ENCODE measurements at regions of chr9 and their contacts with region 1.

Region 1: DNA sequence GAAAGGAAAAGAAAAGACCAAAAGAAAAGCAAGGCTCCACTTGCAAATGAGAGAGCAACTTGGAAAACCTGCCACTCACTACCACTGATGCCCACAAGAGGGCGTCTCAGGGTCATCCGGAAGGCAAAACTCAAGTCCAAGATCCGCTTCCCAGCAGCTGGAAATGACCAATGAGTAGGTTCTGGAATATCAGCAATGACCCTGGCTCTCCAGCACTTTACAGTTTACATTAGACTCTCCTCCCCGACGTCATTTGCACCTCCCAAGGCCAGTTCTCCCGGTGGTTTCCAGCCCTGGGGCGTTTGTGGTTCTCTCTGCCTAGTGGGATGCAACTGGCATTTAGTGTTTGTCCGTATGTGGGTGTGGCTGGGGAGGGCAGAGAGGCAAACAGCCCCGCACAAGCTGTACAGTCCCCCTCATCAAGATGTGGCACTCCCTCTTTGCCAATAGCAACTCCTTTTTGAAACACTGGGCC is 193.8 kb upstream of the ZNF618 start:
- DNase-seq: peak; percentile 69
- ATAC-seq: no peak
- H3K4me3 Mint-ChIP-seq: no peak overlapping the region
- H3K27ac Mint-ChIP-seq: no peak overlapping the region
- H3K4me1 Mint-ChIP-seq: peaks cover 1% of the 10 kb centered on the region
- H3K27me3 Mint-ChIP-seq: peaks cover 61% of the 10 kb centered on the region
- CTCF ChIP-seq: peak; percentile 88

Region 2: DNA sequence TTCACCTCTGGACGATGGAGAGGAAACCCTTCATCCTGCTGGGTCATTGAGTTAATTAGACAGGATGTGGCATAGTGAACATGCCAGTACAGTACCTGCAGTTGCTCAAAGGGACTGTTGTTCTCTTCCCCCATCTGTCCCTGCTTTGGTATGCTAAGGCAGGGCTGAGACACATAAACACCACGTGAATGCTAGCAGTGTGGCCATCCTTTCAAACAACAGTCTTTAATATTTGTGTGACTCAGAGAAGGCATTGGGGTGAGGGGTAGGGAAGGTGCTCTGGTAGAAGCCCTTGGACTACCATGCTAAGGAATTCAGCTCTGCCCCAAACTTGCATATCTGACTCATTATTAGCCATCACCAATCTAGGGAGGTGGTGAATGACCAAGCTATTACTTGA is 13.6 kb after region 1 on chr9:
- CTCF ChIA-PET with region 1: interaction called, 25 read pairs
- POLR2A ChIA-PET with region 1: interaction called, 3 read pairs
- intact Hi-C with region 1: no loop called
- DNase-seq: no peak
- ATAC-seq: peak; percentile 53
- H3K4me3 Mint-ChIP-seq: no peak overlapping the region
- H3K27ac Mint-ChIP-seq: no peak overlapping the region
- H3K4me1 Mint-ChIP-seq: peaks cover 13% of the 10 kb centered on the region
- H3K27me3 Mint-ChIP-seq: peaks cover 18% of the 10 kb centered on the region
- CTCF ChIP-seq: no peak

Region 3: GRCh38 chr9:113728989-113729388 is 46.7 kb after region 1 on chr9:
- CTCF ChIA-PET with region 1: no interaction called
- POLR2A ChIA-PET with region 1: no interaction called
- intact Hi-C with region 1: no loop called
- DNase-seq: no peak
- ATAC-seq: no peak
- H3K4me3 Mint-ChIP-seq: no peak overlapping the region
- H3K27ac Mint-ChIP-seq: no peak overlapping the region
- H3K4me1 Mint-ChIP-seq: no peaks in the 10 kb centered on the region
- H3K27me3 Mint-ChIP-seq: peaks cover 9% of the 10 kb centered on the region
- CTCF ChIP-seq: no peak

Region 4: GRCh38 chr9:113929634-113930389 is 247.5 kb after region 1 on chr9:
- CTCF ChIA-PET with region 1: no interaction called
- POLR2A ChIA-PET with region 1: no interaction called
- intact Hi-C with region 1: no loop called
- DNase-seq: no peak
- ATAC-seq: no peak
- H3K4me3 Mint-ChIP-seq: no peak overlapping the region
- H3K27ac Mint-ChIP-seq: no peak overlapping the region
- H3K4me1 Mint-ChIP-seq: no peaks in the 10 kb centered on the region
- H3K27me3 Mint-ChIP-seq: no peaks in the 10 kb centered on the region
- CTCF ChIP-seq: no peak

Region 5: DNA sequence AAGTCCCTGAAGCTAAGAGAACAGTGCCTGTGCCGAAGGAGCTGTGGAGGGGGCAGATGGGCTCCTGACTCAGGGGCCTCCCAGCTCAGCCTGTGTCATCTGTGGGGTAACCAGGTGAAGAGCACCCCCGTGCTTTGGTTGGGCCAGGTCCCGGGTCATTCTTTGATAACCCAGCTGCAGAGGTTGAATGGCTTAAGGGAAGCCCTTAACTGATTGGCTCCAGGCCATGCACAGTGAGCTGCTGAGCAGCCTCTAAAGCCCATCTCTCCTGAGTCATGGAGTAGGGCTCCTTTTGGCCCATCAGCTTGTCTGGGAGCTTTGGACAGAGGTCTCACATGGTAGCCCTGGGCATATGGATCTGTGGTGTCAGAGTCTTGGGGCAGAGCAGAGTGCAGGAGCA is 501.7 kb after region 1 on chr9:
- CTCF ChIA-PET with region 1: no interaction called
- POLR2A ChIA-PET with region 1: no interaction called
- intact Hi-C with region 1: no loop called
- DNase-seq: no peak
- ATAC-seq: no peak
- H3K4me3 Mint-ChIP-seq: no peak overlapping the region
- H3K27ac Mint-ChIP-seq: no peak overlapping the region
- H3K4me1 Mint-ChIP-seq: no peaks in the 10 kb centered on the region
- H3K27me3 Mint-ChIP-seq: peaks cover 3% of the 10 kb centered on the region
- CTCF ChIP-seq: no peak

Measured in activated CD8-positive, alpha-beta T cell treated with anti-CD3 and anti-CD28 coated beads for 36 hours (primary cell).